CD8-positive, alpha-beta T cell (primary cell): ENCODE measurements at regions of chr16 and their contacts with region 1.

Region 1: GRCh38 chr16:75647492-75648264 is at the starts of genes KARS1 and TERF2IP:
- DNase-seq: peak; percentile 92 to 98 (median 94)
- ATAC-seq: peak; percentile 83
- H3K4me3 ChIP-seq: peak within 1 kb of the TSS; percentile 72 to 91
- H3K4me3 Mint-ChIP-seq: peak within 1 kb of the TSS; percentile 100
- H3K27ac ChIP-seq: peak within 1 kb of the TSS; percentile 89 to 92
- H3K27ac Mint-ChIP-seq: peak within 1 kb of the TSS; percentile 96
- H3K4me1 ChIP-seq: peaks cover 52% of the 10 kb centered on the region
- H3K4me1 Mint-ChIP-seq: peaks cover 69% of the 10 kb centered on the region
- H3K27me3 ChIP-seq: no peaks in the 10 kb centered on the region
- H3K27me3 Mint-ChIP-seq: no peaks in the 10 kb centered on the region
- CTCF ChIP-seq: no peak
- total RNA-seq, gene KARS1: 162 to 168 TPM
- total RNA-seq, gene TERF2IP: 107 to 112 TPM

Region 2: GRCh38 chr16:74606521-74607310 is 1041.0 kb before region 1 on chr16 and contains the start of gene GLG1:
- CTCF ChIA-PET with region 1: no interaction called
- POLR2A ChIA-PET with region 1: no interaction called
- intact Hi-C with region 1: loop called in 1 of 2 experiments (anchors 5 kb)
- DNase-seq: peak; percentile 80 to 96 (median 92)
- ATAC-seq: peak; percentile 94
- H3K4me3 ChIP-seq: peak within 1 kb of the TSS; percentile 65 to 80
- H3K4me3 Mint-ChIP-seq: peak within 1 kb of the TSS; percentile 97
- H3K27ac ChIP-seq: peak within 1 kb of the TSS; percentile 90 to 93
- H3K27ac Mint-ChIP-seq: peak within 1 kb of the TSS; percentile 97
- H3K4me1 ChIP-seq: peaks cover 65% of the 10 kb centered on the region
- H3K4me1 Mint-ChIP-seq: peaks cover 64% of the 10 kb centered on the region
- H3K27me3 ChIP-seq: no peaks in the 10 kb centered on the region
- H3K27me3 Mint-ChIP-seq: no peaks in the 10 kb centered on the region
- CTCF ChIP-seq: no peak
- total RNA-seq, gene GLG1: 73.7 to 79.4 TPM

Region 3: DNA sequence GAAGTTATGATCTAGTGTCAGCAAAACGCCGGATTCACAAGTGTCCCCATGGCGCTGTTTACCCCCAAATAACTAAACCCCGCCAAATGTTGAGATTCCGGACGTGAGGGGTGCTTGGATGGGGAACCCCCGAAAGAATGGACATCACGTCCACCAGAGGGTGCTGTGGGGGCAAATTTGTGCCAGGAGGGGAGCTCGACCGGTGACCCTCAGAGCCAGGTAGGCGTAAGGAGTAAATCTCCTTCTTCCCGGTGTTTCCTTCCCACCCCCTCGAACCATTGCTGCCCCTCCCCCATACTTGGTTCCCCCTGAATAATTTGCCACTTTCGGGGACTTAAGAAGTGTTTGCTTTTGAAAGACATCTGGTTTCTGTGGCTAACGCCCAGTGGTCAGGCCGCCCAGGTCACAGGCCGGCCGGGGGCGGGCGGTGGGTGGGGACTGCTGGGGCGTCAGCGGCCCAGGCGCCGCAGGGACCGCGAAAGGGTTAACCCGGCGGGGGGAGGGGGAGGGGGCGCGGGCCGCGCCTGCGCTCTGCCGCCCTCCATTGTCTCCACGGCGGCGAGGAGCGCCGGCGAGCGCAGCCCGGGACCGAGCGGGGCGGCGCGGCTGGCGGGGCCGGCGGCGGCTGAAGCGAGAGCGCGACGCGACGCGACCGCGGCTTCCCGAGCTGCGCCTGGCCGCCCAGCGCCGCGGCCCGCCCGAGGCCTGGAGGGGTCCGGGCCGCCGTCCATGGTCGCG is 649.0 kb before region 1 on chr16 and contains the start of gene ZNRF1:
- CTCF ChIA-PET with region 1: no interaction called
- POLR2A ChIA-PET with region 1: no interaction called
- intact Hi-C with region 1: loop called in 1 of 2 experiments (anchors 5 kb)
- DNase-seq: peak; percentile 61 to 89 (median 79)
- ATAC-seq: peak; percentile 82
- H3K4me3 ChIP-seq: peak within 1 kb of the TSS; percentile 58 to 79
- H3K4me3 Mint-ChIP-seq: peak within 1 kb of the TSS; percentile 90
- H3K27ac ChIP-seq: peak within 1 kb of the TSS in 1 of 2 experiments; percentile 37
- H3K27ac Mint-ChIP-seq: peak within 1 kb of the TSS; percentile 85
- H3K4me1 ChIP-seq: peaks cover 20% of the 10 kb centered on the region
- H3K4me1 Mint-ChIP-seq: peaks cover 15% of the 10 kb centered on the region
- H3K27me3 ChIP-seq: peaks cover 0 to 7% of the 10 kb centered on the region in 2 experiments
- H3K27me3 Mint-ChIP-seq: no peaks in the 10 kb centered on the region
- CTCF ChIP-seq: peak; percentile 60
- total RNA-seq, gene ZNRF1: 1.7 to 2.0 TPM

Region 4: DNA sequence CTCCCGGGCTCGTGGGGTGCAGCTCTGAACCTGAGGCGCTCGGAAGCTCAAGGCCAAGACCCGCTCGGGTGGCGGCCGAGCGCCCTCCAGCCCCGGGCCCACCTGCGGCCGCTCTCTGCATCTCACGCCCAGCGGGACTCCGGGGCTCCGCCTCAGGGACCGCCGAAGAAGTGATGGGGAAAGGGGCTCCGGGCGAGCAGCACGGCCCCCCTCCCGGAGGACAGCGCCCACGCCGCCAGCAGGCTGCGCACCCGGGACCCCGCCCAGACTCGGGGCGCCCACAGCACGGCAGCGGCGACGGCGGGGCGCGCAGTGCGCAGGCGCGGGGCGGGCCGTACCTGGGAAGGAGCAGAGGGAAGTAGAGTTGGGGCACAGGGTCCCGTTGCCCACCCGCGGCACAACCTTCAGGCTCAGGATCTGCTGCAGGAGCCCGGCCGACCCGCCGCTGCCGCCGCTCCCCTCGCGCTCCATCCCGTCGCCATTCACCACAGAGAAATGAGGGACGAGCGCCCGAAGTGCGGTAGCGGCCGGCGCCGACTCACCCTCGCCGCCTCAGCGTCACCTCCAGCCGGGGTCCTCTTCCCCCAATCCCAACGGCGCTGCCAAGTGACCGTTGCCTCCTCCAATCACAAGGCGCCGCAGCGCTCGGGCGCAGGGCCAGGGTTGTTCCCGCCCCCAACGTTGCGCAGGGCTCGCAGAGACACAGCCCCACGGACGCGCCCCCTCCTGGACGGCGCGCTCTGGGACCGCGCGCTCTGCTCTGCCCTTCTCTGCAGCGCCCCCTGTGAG is 183.4 kb before region 1 on chr16 and contains the start of gene TMEM170A:
- CTCF ChIA-PET with region 1: interaction called, 4 read pairs
- POLR2A ChIA-PET with region 1: interaction called, 17 read pairs
- intact Hi-C with region 1: loop called (anchors 1 kb)
- DNase-seq: peak; percentile 97 to 99 (median 99)
- ATAC-seq: peak; percentile 89
- H3K4me3 ChIP-seq: peak within 1 kb of the TSS; percentile 92 to 99
- H3K4me3 Mint-ChIP-seq: peak within 1 kb of the TSS; percentile 94
- H3K27ac ChIP-seq: peak within 1 kb of the TSS; percentile 96 to 99
- H3K27ac Mint-ChIP-seq: peak within 1 kb of the TSS; percentile 97
- H3K4me1 ChIP-seq: peaks cover 31% of the 10 kb centered on the region
- H3K4me1 Mint-ChIP-seq: peaks cover 42% of the 10 kb centered on the region
- H3K27me3 ChIP-seq: no peaks in the 10 kb centered on the region
- H3K27me3 Mint-ChIP-seq: no peaks in the 10 kb centered on the region
- CTCF ChIP-seq: peak; percentile 100
- total RNA-seq, gene TMEM170A: 36.9 to 37.5 TPM

Region 5: GRCh38 chr16:75566040-75566810 is 81.5 kb before region 1 on chr16 and contains the start of gene GABARAPL2:
- CTCF ChIA-PET with region 1: no interaction called
- POLR2A ChIA-PET with region 1: interaction called, 19 read pairs
- intact Hi-C with region 1: loop called (anchors 1 to 2 kb)
- DNase-seq: peak; percentile 84 to 96 (median 91)
- ATAC-seq: peak; percentile 72
- H3K4me3 ChIP-seq: peak within 1 kb of the TSS; percentile 87 to 98
- H3K4me3 Mint-ChIP-seq: peak within 1 kb of the TSS; percentile 94
- H3K27ac ChIP-seq: peak within 1 kb of the TSS; percentile 81 to 90
- H3K27ac Mint-ChIP-seq: peak within 1 kb of the TSS; percentile 97
- H3K4me1 ChIP-seq: peaks cover 12% of the 10 kb centered on the region
- H3K4me1 Mint-ChIP-seq: peaks cover 46% of the 10 kb centered on the region
- H3K27me3 ChIP-seq: peaks cover 0 to 3% of the 10 kb centered on the region in 2 experiments
- H3K27me3 Mint-ChIP-seq: peaks cover 15% of the 10 kb centered on the region
- CTCF ChIP-seq: no peak
- total RNA-seq, gene GABARAPL2: 37.4 to 39.4 TPM

Region 6: GRCh38 chr16:75632857-75633256 is 14.8 kb before region 1 on chr16:
- CTCF ChIA-PET with region 1: interaction called, 6 read pairs
- POLR2A ChIA-PET with region 1: interaction called, 27 read pairs
- intact Hi-C with region 1: loop called in 1 of 2 experiments (anchors 2 kb)
- DNase-seq: no peak
- ATAC-seq: no peak
- H3K4me3 ChIP-seq: no peak overlapping the region
- H3K4me3 Mint-ChIP-seq: no peak overlapping the region
- H3K27ac ChIP-seq: no peak overlapping the region
- H3K27ac Mint-ChIP-seq: no peak overlapping the region
- H3K4me1 ChIP-seq: peaks cover 9% of the 10 kb centered on the region
- H3K4me1 Mint-ChIP-seq: peaks cover 13% of the 10 kb centered on the region
- H3K27me3 ChIP-seq: no peaks in the 10 kb centered on the region
- H3K27me3 Mint-ChIP-seq: no peaks in the 10 kb centered on the region
- CTCF ChIP-seq: no peak

Region 7: DNA sequence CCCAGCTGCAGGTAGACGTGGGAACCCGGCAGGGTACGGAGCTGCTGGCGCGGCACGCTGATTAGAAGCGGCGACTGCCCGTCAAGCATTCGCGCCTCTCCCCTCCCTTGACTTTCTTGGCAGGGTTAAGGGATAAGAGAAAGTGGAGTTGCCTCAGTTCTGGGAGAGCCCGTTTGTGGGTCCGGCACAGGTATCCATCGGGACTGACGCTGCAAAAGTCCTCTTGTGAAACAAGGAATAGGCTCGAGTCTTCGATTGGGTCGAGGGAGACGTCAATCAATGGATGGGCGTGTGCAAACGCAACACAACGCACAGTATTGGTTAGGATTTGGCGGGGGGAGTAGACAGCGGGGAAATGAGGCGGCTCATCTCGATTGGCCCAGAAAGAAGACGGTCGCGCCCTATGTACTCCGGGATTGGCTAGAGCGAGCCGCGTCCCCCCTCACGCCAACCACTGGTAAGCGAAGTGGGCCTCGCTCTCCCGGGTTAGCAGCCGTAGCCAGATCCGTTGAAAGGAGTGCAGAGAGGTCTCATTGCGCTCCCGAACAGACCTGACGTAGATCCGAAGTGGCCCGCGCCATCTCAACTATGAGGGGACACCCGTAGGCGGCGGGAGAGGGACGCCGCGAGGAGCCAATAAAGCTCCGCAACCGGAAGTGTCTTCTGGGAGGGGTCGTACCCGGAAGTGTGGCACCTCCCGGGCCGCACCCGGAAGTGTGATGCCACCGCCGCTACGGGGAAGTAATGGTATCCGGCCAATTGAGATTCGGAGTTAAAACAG is 1543.0 kb after region 1 on chr16 and contains the start of gene MON1B:
- CTCF ChIA-PET with region 1: no interaction called
- POLR2A ChIA-PET with region 1: interaction called, 9 read pairs
- intact Hi-C with region 1: loop called (anchors 1 to 5 kb)
- DNase-seq: peak; percentile 88 to 99 (median 95)
- ATAC-seq: peak; percentile 93
- H3K4me3 ChIP-seq: peak within 1 kb of the TSS; percentile 70 to 81
- H3K4me3 Mint-ChIP-seq: peak within 1 kb of the TSS; percentile 100
- H3K27ac ChIP-seq: peak within 1 kb of the TSS; percentile 98
- H3K27ac Mint-ChIP-seq: peak within 1 kb of the TSS; percentile 100
- H3K4me1 ChIP-seq: peaks cover 26% of the 10 kb centered on the region
- H3K4me1 Mint-ChIP-seq: peaks cover 52% of the 10 kb centered on the region
- H3K27me3 ChIP-seq: no peaks in the 10 kb centered on the region
- H3K27me3 Mint-ChIP-seq: peaks cover 6% of the 10 kb centered on the region
- CTCF ChIP-seq: no peak
- total RNA-seq, gene MON1B: 49.1 to 50.7 TPM